BJ (cell line): ENCODE measurements at regions of chr16 and their contacts with region 1.

Region 1: GRCh38 chr16:84672276-84673202 is 24.2 kb downstream of the KLHL36 start:
- DNase-seq: no peak
- H3K4me3 ChIP-seq: no peak overlapping the region
- H3K27me3 ChIP-seq: no peaks in the 10 kb centered on the region
- CTCF ChIP-seq: peak; percentile 96

Region 2: GRCh38 chr16:84647828-84648594 is 24.5 kb before region 1 on chr16 and contains the start of gene KLHL36:
- CTCF ChIA-PET with region 1: interaction called, 21 read pairs
- POLR2A ChIA-PET with region 1: no interaction called
- DNase-seq: no peak
- H3K4me3 ChIP-seq: peak within 1 kb of the TSS; percentile 82
- H3K27me3 ChIP-seq: no peaks in the 10 kb centered on the region
- CTCF ChIP-seq: no peak
- polyA plus RNA-seq, gene KLHL36: 33.2 and 43.7 TPM in 2 replicates

Region 3: GRCh38 chr16:84687715-84688114 is 15.2 kb after region 1 on chr16:
- CTCF ChIA-PET with region 1: interaction called, 37 read pairs
- POLR2A ChIA-PET with region 1: no interaction called
- DNase-seq: peak; percentile 59
- H3K4me3 ChIP-seq: no peak overlapping the region
- H3K27me3 ChIP-seq: no peaks in the 10 kb centered on the region
- CTCF ChIP-seq: no peak

Region 4: DNA sequence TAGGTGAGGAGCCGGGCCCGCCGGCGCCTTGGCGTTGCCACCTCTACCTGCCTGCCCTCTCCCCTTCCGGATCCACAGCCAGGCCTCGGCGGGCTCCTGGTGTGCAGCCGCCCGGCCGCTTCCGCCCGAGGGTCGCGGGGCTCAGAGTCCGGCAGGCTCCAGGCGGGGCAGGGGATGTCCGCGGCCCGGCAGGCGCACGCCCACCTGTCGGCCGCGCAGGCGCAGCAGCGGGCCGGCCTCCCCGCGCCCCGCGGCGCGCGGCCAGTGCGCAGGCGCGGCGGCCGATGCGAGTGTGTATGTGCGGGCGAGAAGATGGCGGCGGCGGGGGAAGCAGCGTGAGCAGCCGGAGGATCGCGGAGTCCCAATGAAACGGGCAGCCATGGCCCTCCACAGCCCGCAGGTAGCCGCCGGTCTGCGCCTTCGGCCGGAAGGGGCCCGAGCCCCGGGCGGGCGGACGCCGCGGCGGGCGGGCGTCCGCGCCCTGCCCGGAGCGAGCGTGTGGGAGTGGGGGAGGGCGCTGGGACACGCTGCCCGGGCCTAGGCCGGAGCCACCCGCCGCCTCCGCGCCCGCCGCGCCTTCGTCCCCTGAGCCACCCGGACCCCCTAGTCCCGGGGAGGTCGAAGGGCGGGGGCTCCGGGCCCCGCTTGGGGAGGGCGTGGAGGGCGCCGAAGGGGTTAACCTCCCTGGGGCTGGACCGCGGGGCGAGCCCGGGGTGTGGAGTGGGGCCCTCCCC is 27.3 kb after region 1 on chr16 and contains the start of gene USP10:
- CTCF ChIA-PET with region 1: interaction called, 16 read pairs
- POLR2A ChIA-PET with region 1: no interaction called
- DNase-seq: no peak
- H3K4me3 ChIP-seq: peak within 1 kb of the TSS; percentile 83
- H3K27me3 ChIP-seq: no peaks in the 10 kb centered on the region
- CTCF ChIP-seq: no peak
- polyA plus RNA-seq, gene USP10: 39.6 and 55.1 TPM in 2 replicates

Region 5: GRCh38 chr16:84712138-84712671 is 39.7 kb after region 1 on chr16:
- CTCF ChIA-PET with region 1: interaction called, 10 read pairs
- POLR2A ChIA-PET with region 1: no interaction called
- DNase-seq: no peak
- H3K4me3 ChIP-seq: no peak overlapping the region
- H3K27me3 ChIP-seq: no peaks in the 10 kb centered on the region
- CTCF ChIP-seq: no peak

Region 6: DNA sequence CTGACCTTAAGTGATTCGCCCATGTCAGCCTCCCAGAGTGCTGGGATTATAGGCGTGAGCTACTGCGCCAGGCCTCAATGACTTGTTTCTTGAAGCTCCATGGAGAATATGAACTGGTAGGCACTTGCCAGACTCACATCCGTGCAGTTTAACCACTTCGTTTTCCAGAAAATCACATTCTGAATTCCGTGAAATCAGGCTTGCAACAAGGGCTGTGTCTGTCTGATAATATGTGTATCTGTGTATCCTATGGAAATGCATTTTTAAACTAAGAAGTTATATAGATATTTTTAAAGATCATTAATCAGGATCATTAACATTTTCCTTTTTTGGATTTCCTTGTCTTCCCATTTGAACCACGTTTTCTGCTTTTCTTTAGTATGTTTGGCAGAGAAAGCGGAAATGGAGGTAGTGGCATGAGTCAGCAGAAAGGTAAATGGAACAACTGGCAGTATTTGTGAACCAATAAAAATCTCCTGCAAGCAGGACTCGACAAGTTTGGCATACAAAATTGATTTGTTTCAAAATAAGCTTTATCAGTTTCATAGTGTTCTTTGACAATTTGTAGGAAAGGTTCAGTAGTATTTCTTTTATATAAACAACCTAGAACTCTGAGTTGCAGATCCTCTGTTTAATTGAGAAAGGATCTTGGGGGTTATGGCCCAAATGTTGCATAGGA is 60.3 kb after region 1 on chr16:
- CTCF ChIA-PET with region 1: interaction called, 32 read pairs
- POLR2A ChIA-PET with region 1: no interaction called
- DNase-seq: no peak
- H3K4me3 ChIP-seq: no peak overlapping the region
- H3K27me3 ChIP-seq: no peaks in the 10 kb centered on the region
- CTCF ChIP-seq: no peak

Region 7: DNA sequence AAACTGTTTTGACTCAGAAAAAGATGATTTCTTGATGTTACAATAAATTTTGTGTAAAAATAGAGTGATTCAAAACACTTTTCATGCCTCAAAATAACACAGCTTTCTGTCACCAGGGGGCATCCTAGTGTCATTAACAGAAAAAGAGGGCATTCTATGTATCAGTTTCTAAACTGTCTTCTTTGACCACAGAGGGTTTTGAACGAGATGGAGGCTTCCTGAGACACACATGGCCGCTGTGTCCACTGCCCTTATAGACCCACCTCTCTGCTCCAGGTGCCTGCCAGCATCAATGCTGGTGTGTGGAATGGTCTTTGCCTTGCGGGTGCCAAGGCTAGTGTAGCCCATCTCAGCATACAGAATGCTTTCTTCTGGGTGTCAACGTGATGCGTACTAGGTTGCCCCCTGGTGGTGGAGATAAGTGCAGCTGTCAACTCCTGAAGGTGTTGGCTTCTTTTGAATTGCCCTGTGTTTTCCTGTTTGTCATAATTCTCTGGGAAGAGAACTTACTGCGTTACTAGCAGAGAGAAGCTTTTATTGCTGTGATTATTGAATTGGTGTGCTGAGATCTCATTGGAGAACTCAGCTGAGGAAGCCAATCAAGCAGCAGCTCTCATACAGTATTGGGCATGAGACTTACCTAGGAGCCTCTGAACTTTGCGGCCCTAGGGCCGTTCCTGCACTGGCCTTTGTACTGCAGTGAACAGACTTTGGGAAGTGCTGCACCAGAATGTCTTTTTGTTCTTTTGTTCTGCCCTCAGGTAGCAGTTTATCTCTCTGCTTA is 65.9 kb after region 1 on chr16:
- CTCF ChIA-PET with region 1: interaction called, 32 read pairs
- POLR2A ChIA-PET with region 1: no interaction called
- DNase-seq: no peak
- H3K4me3 ChIP-seq: no peak overlapping the region
- H3K27me3 ChIP-seq: no peaks in the 10 kb centered on the region
- CTCF ChIP-seq: peak; percentile 87